ENCODE measurements at regions of chr12 and their contacts with region 1.

Region 1: GRCh38 chr12:75944097-75944904 is 87.3 kb downstream of the PHLDA1 start:
- DNase-seq: no peak
- H3K4me3 ChIP-seq: no peak overlapping the region
- H3K27ac ChIP-seq: peak overlapping the region; percentile 46 to 75 (median 68)
- H3K4me1 ChIP-seq: peaks cover 4 to 13% (median 6%) of the 10 kb centered on the region in 4 donors
- H3K27me3 ChIP-seq: no peaks in the 10 kb centered on the region
- CTCF ChIP-seq: no peak
- EP300 ChIP-seq: no peak
- POLR2A ChIP-seq: no peak

Region 2: DNA sequence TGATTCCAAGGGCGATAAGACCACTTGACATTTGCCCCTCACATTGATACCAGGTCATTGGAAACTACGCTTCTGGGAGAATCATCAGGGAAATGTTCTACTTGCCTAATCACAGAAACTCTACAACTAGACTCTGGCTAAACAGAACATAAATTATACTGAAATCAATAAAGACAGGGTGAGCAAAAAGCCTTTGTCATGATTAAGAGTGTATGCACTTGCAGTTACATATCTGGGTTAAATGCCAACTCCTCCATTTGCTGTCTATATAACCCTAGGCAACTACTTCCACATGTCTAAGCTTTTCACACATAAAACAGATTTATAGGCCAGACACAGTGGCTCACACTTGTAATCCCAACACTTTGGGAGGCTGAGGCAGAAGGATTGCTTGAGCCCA is 38.4 kb before region 1 on chr12:
- in situ Hi-C with region 1: no loop called
- intact Hi-C with region 1: loop called (anchors 1 kb)
- DNase-seq: no peak
- H3K4me3 ChIP-seq: no peak overlapping the region
- H3K27ac ChIP-seq: no peak overlapping the region
- H3K4me1 ChIP-seq: peaks cover 0 to 10% (median 2%) of the 10 kb centered on the region in 4 donors
- H3K27me3 ChIP-seq: no peaks in the 10 kb centered on the region
- CTCF ChIP-seq: no peak
- EP300 ChIP-seq: no peak
- POLR2A ChIP-seq: no peak